Ascending aorta (tissue), 2 donors: ENCODE measurements at regions of chr2 and their contacts with region 1.

Region 1: DNA sequence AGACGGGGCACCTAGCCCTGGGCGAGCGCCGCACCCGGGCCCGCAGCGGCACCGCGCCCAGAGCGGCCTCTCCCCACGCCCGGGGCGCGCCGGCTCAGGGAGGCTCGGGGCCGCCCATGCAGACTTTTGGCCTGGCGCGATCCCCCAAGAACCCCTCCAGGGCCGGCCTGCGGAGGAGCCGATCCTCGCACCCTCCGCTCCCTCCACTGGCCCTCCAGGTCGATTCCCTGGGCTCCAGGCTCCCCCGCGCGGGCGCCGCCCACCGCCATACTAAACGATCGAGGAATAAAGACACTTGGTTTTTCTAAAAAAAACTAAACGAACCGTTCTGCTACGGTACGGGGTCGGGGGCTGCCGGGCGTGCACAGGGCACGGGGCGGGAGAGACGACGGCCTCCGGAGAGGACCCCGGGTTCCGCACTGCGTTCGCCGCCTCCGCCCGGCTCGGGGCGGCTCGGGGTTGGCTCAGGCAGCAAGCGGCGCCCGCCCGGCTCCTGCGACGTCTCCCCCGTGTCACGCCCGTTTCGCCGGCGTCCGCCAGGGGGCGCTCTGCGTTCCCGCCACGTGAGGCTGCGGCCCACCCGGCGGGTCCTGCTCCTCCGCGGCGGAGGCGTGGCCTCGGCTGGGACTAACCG is 365 bp upstream of the KHK start:
- DNase-seq: peak; percentile 78 to 97
- H3K4me3 ChIP-seq: peak overlapping the region; percentile 61 to 66
- H3K27ac ChIP-seq: peak overlapping the region; percentile 81 to 87
- H3K4me1 ChIP-seq: peaks cover 9 to 29% of the 10 kb centered on the region in 2 donors
- H3K27me3 ChIP-seq: no peaks in the 10 kb centered on the region
- CTCF ChIP-seq: peak; percentile 80 to 98 (median 85)

Region 2: GRCh38 chr2:26959331-26959730 is 126.9 kb before region 1 on chr2:
- intact Hi-C with region 1: loop called (anchors 1 kb)
- DNase-seq: no peak
- H3K4me3 ChIP-seq: no peak overlapping the region
- H3K27ac ChIP-seq: no peak overlapping the region
- H3K4me1 ChIP-seq: no peaks in the 10 kb centered on the region
- H3K27me3 ChIP-seq: peaks cover 4% of the 10 kb centered on the region
- CTCF ChIP-seq: no peak

Region 3: GRCh38 chr2:27032495-27033252 is 53.5 kb before region 1 on chr2 and contains the start of gene TMEM214:
- intact Hi-C with region 1: loop called (anchors 1 kb)
- DNase-seq: peak; percentile 49 to 94
- H3K4me3 ChIP-seq: peak within 1 kb of the TSS; percentile 59 to 92
- H3K27ac ChIP-seq: peak within 1 kb of the TSS; percentile 78 to 91
- H3K4me1 ChIP-seq: peaks cover 5 to 18% of the 10 kb centered on the region in 2 donors
- H3K27me3 ChIP-seq: no peaks in the 10 kb centered on the region
- CTCF ChIP-seq: peak in 1 of 3 experiments; percentile 8
- total RNA-seq, gene TMEM214: 74.1 TPM

Region 4: GRCh38 chr2:27050281-27050995 is 35.8 kb before region 1 on chr2:
- intact Hi-C with region 1: loop called (anchors 1 kb)
- DNase-seq: peak; percentile 72 to 96
- H3K4me3 ChIP-seq: peak overlapping the region; percentile 71 to 85
- H3K27ac ChIP-seq: peak overlapping the region; percentile 85 to 93
- H3K4me1 ChIP-seq: peaks cover 0 to 4% of the 10 kb centered on the region in 2 donors
- H3K27me3 ChIP-seq: no peaks in the 10 kb centered on the region
- CTCF ChIP-seq: peak; percentile 51 to 64 (median 55)

Region 5: DNA sequence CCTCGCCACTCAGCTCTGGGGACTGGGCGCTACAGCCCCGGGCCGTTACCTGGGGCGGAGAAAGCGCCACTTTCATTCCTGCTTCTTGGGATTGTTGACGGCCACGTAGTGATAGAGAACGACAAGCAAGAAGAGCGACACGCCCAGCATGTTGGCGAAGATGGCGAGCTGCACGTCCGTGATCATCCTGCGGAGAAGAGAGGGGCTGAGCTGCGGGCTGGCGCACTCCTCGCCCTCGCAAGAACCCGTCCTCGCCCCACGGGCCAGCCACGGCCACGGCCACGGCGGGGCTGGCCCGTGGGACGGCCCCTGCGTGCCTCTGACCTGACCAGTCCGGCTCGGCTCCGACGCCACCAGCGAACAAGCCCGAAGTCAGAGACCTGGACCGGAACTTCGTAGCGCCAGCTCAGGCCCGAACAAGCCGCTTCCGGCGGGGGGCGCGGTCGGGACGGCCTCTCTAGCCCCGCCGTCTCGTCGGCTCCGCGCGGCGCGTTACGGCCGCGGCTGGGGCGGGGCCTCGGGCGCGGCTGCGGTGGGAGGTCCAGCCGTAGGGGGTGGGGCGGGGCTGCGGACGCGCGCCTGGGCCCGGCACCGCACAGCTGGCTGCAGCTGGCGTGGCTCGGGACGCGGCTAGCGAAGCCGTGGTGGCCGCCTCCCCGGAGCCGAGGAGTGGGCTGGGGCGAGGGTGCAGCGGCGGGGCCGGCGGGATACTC is 14.8 kb before region 1 on chr2 and contains the start of gene OST4:
- intact Hi-C with region 1: loop called (anchors 1 kb)
- DNase-seq: peak; percentile 78 to 97
- H3K4me3 ChIP-seq: peak within 1 kb of the TSS; percentile 81 to 91
- H3K27ac ChIP-seq: peak within 1 kb of the TSS; percentile 94 to 97
- H3K4me1 ChIP-seq: peaks cover 11 to 50% of the 10 kb centered on the region in 2 donors
- H3K27me3 ChIP-seq: no peaks in the 10 kb centered on the region
- CTCF ChIP-seq: peak in 1 of 3 experiments; percentile 16
- total RNA-seq, gene OST4: 158 TPM

Region 6: DNA sequence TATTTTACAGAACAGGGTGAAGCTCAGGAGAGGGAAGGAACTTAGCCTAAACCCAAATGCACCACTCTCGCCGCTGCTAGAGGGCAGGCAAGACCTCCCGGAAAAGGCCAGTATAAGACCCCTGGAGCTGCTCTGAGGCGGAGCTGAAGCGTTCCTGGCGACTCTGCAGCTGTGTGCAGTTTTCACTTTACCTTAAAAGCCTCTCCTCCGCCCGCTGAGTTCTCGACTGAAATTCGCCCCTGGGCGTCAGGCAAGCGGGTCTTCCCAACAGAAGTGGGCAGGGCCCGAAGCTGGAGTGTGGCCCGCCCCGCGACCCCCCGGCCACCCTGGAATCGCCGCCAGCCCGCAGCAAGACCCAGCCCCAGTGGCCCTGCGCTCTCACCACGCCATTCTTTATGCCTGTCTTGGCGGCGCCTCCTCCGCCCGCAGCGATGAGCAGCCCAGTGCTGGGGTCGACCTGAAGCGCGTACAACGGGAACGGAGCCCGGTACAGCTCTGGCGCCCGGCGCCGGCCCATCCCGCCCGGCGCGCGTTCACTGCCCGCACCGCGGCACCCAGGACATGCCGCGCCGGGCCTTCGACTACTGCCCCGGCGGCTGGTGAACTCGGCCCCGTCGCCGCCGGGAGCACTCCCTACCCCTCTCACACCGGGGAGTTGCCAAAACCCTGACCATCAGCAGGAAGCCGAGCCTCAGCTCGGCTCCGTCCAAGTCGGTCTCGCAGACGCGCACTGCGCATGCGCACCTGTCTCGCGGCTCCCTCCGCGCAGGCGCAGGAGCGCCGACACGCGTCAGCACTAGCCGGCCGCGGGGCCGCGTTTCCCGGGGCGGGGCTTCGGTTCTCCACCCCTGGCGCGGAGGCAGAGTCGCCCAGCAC is 47.9 kb after region 1 on chr2 and contains the start of gene PREB:
- intact Hi-C with region 1: loop called (anchors 5 kb)
- DNase-seq: peak; percentile 77 to 98
- H3K4me3 ChIP-seq: peak within 1 kb of the TSS; percentile 89 to 96
- H3K27ac ChIP-seq: peak within 1 kb of the TSS; percentile 90 to 91
- H3K4me1 ChIP-seq: peaks cover 5 to 11% of the 10 kb centered on the region in 2 donors
- H3K27me3 ChIP-seq: no peaks in the 10 kb centered on the region
- CTCF ChIP-seq: peak in 1 of 3 experiments; percentile 11
- total RNA-seq, gene PREB: 116 TPM

Region 7: DNA sequence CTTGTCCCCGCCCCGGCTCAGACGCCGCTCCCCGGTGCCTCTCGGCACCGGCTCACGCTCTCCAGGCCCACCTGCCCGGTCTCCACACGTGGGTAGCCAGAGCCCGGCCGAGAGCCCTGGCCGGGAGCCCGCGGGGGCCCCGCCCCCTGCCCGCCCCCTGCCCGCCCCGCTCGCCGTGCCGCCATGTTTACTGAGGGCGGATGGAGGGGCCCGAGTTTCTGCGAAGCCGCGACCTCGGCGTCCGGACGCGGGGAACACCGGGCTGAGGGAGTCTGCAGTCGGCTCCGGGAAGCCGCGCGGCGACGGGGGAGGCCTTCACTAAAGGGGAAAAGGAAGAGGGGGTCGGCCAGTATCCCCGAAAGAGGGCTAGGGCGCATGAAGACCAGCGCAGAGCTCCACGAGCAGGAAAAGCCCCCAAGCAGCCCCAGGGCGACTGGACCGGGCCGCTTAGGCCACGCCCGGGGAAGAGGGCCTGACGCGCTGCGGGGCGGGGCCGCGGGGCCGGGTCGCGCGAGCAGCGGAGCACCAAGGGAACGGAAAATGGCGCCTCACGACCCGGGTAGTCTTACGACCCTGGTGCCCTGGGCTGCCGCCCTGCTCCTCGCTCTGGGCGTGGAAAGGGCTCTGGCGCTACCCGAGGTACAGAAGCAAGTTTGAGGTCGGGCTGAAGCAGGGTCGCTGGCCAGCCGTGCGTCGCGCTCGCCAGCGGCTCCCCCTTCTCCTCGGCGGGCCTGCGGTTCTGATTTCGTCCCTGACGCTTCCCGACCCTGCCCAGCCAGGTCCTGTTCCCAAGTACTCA is 125.8 kb after region 1 on chr2 and contains the starts of genes ATRAID and SLC5A6:
- intact Hi-C with region 1: loop called (anchors 2 kb)
- DNase-seq: peak; percentile 35 to 93
- H3K4me3 ChIP-seq: peak within 1 kb of the TSS; percentile 72 to 77
- H3K27ac ChIP-seq: peak within 1 kb of the TSS; percentile 94 to 98
- H3K4me1 ChIP-seq: peaks cover 11 to 19% of the 10 kb centered on the region in 2 donors
- H3K27me3 ChIP-seq: no peaks in the 10 kb centered on the region
- CTCF ChIP-seq: no peak
- total RNA-seq, gene ATRAID: 284 TPM
- total RNA-seq, gene SLC5A6: 85.7 TPM